K562 (cell line): ENCODE measurements at regions of chr9 and their contacts with region 1.

Region 1: GRCh38 chr9:111597817-111598729 is 1.4 kb downstream of the PTGR1 start:
- DNase-seq: peak; percentile 27 to 73 (median 44)
- ATAC-seq: peak; percentile 86
- H3K4me3 ChIP-seq: no peak overlapping the region
- H3K27ac ChIP-seq: no peak overlapping the region
- H3K4me1 ChIP-seq: peaks cover 2 to 14% of the 10 kb centered on the region in 2 experiments; a peak in 2 of 5 replicates
- H3K27me3 ChIP-seq: peaks cover 0 to 4% of the 10 kb centered on the region in 2 experiments; a peak in 2 of 5 replicates
- CTCF ChIP-seq: peak; percentile 77 to 84 (median 78)
- EP300 ChIP-seq: no peak
- POLR2A ChIP-seq: no peak
- RAD21 ChIP-seq: peak; percentile 49 to 70

Region 2: DNA sequence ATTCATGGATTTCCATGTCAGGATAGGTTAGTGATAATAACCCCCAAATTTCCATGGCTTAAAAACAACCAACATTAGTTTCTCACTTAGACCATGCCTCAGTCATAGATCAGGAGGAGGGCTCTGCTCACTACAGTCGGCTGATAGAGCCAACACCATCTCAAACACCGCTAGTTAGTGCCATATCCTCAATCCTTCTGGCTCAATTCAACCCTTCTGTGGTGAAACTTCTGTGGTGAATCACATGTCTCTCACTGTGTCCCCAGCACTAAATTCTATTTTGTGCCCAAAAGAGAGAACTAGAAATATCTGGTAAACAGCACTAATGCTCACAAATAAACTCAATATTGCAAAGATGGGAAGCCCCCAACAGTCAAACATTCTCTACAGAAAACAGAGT is 135.0 kb before region 1 on chr9:
- CTCF ChIA-PET with region 1: no interaction called
- POLR2A ChIA-PET with region 1: no interaction called
- in situ Hi-C with region 1: no loop called
- intact Hi-C with region 1: no loop called
- DNase-seq: no peak
- ATAC-seq: no peak
- H3K4me3 ChIP-seq: no peak overlapping the region
- H3K27ac ChIP-seq: no peak overlapping the region
- H3K4me1 ChIP-seq: no peaks in the 10 kb centered on the region; a peak in 1 of 5 replicates
- H3K27me3 ChIP-seq: no peaks in the 10 kb centered on the region
- CTCF ChIP-seq: no peak
- EP300 ChIP-seq: no peak
- POLR2A ChIP-seq: no peak
- RAD21 ChIP-seq: no peak

Region 3: DNA sequence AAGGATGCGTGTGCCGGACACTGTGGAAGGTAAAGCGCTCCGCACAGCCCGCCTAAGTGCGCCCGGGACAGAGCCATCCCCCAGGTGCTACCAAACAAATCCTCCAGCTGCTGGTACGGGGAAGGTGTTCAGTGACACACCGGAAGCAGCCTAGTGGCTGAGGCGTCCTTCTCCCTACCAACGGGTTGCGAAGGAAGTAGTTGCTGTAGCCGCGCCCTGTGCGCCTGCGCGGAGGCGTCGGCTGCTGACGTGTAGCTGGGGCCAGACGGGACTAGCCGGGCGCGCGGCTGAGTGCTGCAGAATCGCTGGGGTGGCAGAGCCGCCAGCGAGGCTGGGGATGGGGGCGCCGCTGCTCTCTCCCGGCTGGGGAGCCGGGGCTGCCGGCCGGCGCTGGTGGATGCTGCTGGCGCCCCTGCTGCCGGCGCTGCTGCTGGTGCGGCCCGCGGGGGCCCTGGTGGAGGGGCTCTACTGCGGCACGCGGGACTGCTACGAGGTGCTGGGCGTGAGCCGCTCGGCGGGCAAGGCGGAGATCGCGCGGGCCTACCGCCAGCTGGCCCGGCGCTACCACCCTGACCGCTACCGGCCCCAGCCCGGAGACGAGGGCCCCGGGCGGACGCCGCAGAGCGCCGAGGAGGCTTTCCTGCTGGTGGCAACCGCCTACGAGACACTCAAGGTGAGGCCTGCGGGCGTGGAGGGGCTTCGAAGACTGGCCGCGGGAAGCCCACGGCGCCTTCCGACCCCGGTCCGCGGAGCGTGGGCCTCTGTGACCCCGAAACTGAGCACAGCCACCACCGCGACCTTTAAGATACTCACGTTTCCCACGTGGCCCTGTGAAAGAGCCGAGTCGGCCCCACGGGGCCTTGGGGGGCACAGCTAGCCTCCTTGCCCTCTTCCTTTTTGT is 33.2 kb after region 1 on chr9 and contains the start of gene DNAJC25:
- CTCF ChIA-PET with region 1: no interaction called
- POLR2A ChIA-PET with region 1: no interaction called
- in situ Hi-C with region 1: no loop called
- intact Hi-C with region 1: loop called (anchors 5 kb)
- DNase-seq: peak; percentile 98 to 99 (median 98)
- ATAC-seq: peak; percentile 97
- H3K4me3 ChIP-seq: peak within 1 kb of the TSS; percentile 97
- H3K27ac ChIP-seq: peak within 1 kb of the TSS; percentile 81
- H3K4me1 ChIP-seq: peaks cover 6 to 21% of the 10 kb centered on the region in 2 experiments
- H3K27me3 ChIP-seq: no peaks in the 10 kb centered on the region
- CTCF ChIP-seq: no peak
- EP300 ChIP-seq: peak; percentile 41; the same call in 1 of the 2 replicates
- POLR2A ChIP-seq: peak; percentile 94
- RAD21 ChIP-seq: no peak
- polyA plus RNA-seq, gene DNAJC25: 3.7 to 4.4 TPM

Region 4: DNA sequence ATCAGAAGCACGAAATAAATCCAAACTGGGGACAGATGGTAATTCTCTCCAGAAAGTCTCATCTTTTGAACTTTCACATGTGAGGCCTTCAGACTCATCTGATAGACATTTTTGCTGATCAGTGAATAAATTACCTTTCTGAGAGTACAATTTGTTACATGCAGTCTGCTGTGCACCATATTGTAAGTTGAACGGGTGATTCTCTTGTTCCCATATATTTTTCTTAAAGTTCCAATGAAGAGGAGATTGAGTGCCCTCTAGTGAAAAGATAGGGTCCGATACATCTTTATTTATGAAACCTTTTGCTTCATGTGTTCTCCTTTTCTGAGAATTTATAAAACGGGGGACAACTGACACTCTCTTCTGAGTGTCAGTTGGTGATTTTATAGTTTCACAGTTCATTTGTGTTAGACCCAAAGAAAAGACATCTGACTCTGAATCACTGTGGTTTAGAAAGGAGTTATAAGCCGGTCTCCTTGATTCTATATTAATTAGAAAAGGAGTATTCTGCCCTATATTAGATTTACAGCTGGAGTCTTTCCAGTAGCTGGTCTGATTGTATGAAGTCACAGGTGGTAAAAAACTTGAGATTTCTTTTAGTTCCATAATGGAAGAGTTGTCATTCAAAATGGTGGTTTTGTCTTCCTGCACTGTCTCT is 93.7 kb after region 1 on chr9:
- CTCF ChIA-PET with region 1: interaction called, 5 read pairs
- POLR2A ChIA-PET with region 1: no interaction called
- in situ Hi-C with region 1: no loop called
- intact Hi-C with region 1: loop called (anchors 1 kb)
- DNase-seq: peak in 2 of 4 experiments; percentile 16 to 39
- ATAC-seq: peak; percentile 63
- H3K4me3 ChIP-seq: no peak overlapping the region
- H3K27ac ChIP-seq: no peak overlapping the region
- H3K4me1 ChIP-seq: no peaks in the 10 kb centered on the region
- H3K27me3 ChIP-seq: no peaks in the 10 kb centered on the region
- CTCF ChIP-seq: peak; percentile 36 to 67 (median 43); a peak in 5 of 6 replicates
- EP300 ChIP-seq: no peak
- POLR2A ChIP-seq: no peak
- RAD21 ChIP-seq: peak; percentile 45 to 80

Region 5: DNA sequence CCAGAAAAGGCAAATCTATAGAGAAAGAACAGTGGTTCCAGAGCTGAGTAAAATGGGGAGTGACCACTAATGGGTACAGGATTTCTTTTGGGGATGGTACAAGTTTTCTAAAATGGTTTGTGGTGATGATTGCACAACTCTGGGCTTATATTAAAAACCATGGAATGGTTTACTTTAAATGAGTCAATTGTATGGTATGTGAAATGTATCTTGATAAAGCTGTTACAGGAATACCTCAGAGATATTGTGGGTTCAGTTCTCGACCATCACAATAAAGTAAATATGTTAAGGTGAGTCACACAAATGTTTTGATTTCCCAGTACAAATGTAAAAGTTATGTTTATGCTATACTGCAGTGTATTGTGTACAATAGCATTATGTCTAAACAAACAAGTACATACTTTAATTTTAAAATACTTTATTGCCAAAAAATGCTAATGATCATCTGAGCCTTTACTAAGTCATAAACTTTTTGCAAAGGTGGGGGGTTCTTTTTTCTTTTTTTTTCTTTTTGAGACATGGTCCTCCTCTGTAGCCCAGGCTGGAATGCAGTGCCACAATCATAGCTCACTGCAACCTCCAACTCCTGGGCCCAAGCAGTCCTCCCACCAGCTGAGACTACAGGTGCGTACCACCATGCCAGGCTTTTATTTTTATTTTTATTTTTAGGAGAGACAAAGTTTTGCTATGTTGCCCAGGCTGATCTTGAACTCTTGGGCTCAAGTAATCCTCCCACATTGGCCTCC is 130.7 kb after region 1 on chr9:
- CTCF ChIA-PET with region 1: no interaction called
- POLR2A ChIA-PET with region 1: no interaction called
- in situ Hi-C with region 1: no loop called
- intact Hi-C with region 1: loop called (anchors 10 kb)
- DNase-seq: no peak
- ATAC-seq: no peak
- H3K4me3 ChIP-seq: no peak overlapping the region
- H3K27ac ChIP-seq: no peak overlapping the region
- H3K4me1 ChIP-seq: no peaks in the 10 kb centered on the region
- H3K27me3 ChIP-seq: no peaks in the 10 kb centered on the region
- CTCF ChIP-seq: no peak
- EP300 ChIP-seq: no peak
- POLR2A ChIP-seq: no peak
- RAD21 ChIP-seq: no peak